ENCODE measurements at regions of chr4 and their contacts with region 1.

Region 1: GRCh38 chr4:2041234-2042130 is 17.6 kb upstream of the NAT8L start:
- DNase-seq: peak; percentile 79 to 98 (median 90)

Region 2: DNA sequence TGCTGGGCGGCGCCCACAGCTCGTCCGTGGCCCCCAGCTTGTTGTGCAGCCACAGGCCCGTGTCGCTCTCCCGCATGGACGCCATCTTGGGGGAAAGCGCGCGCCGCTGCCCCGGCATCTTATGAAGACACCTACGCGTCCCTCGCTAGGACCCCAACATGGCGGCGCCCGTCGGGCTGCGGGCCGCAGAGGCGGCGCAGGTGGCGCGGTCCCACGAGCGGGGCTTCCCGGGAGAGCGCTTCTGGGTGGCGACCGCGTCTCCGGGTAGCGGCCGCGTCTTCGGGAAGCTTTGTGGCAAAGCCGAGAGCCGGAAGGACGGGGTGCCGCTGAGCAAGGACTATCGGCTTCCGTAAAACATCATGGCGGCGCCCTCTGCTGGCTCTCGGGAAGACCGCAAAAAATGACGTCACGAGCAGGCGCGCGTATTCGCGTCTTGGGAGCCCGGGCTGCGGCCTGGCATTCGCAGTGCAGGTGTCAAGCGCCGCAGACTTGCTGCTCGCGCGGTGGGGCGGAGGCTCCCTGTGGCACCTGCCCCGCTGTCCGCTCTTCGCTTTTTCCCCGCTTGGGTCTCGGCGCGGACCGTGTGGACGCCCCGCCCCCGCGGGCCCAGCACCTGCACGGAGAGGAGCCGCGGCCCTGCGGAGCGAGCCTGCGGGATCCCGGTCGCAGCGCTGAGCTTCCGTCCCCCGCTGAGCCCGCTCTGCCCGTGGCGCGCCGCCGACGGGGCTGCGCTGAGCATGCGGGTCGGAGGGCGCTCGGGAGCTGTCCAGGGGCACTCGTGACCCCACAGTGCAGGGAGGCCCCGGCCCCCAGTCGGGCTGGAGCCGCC is 32.4 kb before region 1 on chr4 and contains the start of gene NELFA:
- intact Hi-C with region 1: loop called (anchors 5 kb)
- DNase-seq: peak; percentile 93 to 99 (median 96)

Measured in posterior cingulate gyrus (tissue), 11 donors.